ENCODE measurements at regions of chr19 and their contacts with region 1.

Region 1: GRCh38 chr19:44988896-44989556 is 12.2 kb upstream of the RELB start:
- DNase-seq: peak; percentile 88
- H3K4me3 Mint-ChIP-seq: no peak overlapping the region
- H3K27ac Mint-ChIP-seq: peak overlapping the region; percentile 43
- H3K4me1 Mint-ChIP-seq: peaks cover 6% of the 10 kb centered on the region
- H3K27me3 Mint-ChIP-seq: no peaks in the 10 kb centered on the region

Region 2: DNA sequence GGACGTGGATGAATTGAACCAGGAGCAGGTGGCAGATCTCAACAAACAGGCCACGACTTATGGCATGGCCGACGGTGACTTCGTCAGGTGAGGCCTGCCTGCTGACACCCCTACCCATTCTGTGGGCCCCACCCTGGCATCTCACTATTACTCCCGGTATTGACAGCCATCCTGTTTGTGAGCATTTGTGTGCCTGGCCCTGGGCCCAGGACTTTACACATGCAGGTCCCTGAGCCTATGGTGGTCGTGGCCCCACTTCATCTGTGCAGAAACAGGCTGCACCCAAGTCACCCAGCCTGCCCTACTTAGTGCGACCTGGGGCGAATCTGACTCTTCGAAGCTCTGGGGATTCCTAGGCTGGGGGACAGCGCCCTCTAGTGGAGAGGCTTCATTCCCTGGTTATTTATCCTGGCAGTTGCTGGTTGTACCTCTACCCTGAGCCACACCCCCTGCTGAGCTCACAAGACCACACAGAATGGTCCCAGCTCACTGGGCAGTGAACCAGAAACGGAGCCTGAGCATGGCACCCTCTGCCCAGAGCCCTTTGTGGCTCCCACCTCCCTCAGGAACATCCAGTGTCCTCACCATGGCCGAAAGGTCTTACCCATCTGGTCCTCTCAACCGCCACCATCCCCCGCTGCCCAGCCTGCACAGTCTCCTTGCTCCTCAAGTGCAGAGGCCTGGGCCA is 70.4 kb after region 1 on chr19:
- intact Hi-C with region 1: loop called (anchors 1 kb)
- DNase-seq: peak; percentile 95
- H3K4me3 Mint-ChIP-seq: no peak overlapping the region
- H3K27ac Mint-ChIP-seq: no peak overlapping the region
- H3K4me1 Mint-ChIP-seq: peaks cover 4% of the 10 kb centered on the region
- H3K27me3 Mint-ChIP-seq: no peaks in the 10 kb centered on the region

Region 3: GRCh38 chr19:45117669-45118068 is 128.6 kb after region 1 on chr19:
- intact Hi-C with region 1: no loop called
- DNase-seq: no peak
- H3K4me3 Mint-ChIP-seq: no peak overlapping the region
- H3K27ac Mint-ChIP-seq: peak overlapping the region; percentile 58
- H3K4me1 Mint-ChIP-seq: peaks cover 49% of the 10 kb centered on the region
- H3K27me3 Mint-ChIP-seq: no peaks in the 10 kb centered on the region

Region 4: GRCh38 chr19:45469132-45469944 is 480.3 kb after region 1 on chr19:
- intact Hi-C with region 1: no loop called
- DNase-seq: peak; percentile 98
- H3K4me3 Mint-ChIP-seq: peak overlapping the region; percentile 86
- H3K27ac Mint-ChIP-seq: peak overlapping the region; percentile 94
- H3K4me1 Mint-ChIP-seq: peaks cover 28% of the 10 kb centered on the region
- H3K27me3 Mint-ChIP-seq: peaks cover 49% of the 10 kb centered on the region

Measured in activated CD4-positive, alpha-beta T cell treated with anti-CD3 and anti-CD28 coated beads, Interleukin-2, amount 10 ng/mL, durations not matched to agents 24 days and 14 days (primary cell).